ENCODE measurements at regions of chr7 and their contacts with region 1.

Region 1: GRCh38 chr7:107150375-107151073 is 18.3 kb upstream of the HBP1 start:
- DNase-seq: peak; percentile 71
- H3K4me3 Mint-ChIP-seq: no peak overlapping the region
- H3K27ac Mint-ChIP-seq: no peak overlapping the region
- H3K4me1 Mint-ChIP-seq: peaks cover 12% of the 10 kb centered on the region
- H3K27me3 Mint-ChIP-seq: no peaks in the 10 kb centered on the region
- CTCF ChIP-seq: peak; percentile 59

Region 2: GRCh38 chr7:106793015-106793975 is 357.2 kb before region 1 on chr7:
- CTCF ChIA-PET with region 1: interaction called, 125 read pairs
- POLR2A ChIA-PET with region 1: interaction called, 4 read pairs
- intact Hi-C with region 1: loop called (anchors 1 kb)
- DNase-seq: peak; percentile 54
- H3K4me3 Mint-ChIP-seq: no peak overlapping the region
- H3K27ac Mint-ChIP-seq: no peak overlapping the region
- H3K4me1 Mint-ChIP-seq: no peaks in the 10 kb centered on the region
- H3K27me3 Mint-ChIP-seq: peaks cover 42% of the 10 kb centered on the region
- CTCF ChIP-seq: peak; percentile 77

Region 3: DNA sequence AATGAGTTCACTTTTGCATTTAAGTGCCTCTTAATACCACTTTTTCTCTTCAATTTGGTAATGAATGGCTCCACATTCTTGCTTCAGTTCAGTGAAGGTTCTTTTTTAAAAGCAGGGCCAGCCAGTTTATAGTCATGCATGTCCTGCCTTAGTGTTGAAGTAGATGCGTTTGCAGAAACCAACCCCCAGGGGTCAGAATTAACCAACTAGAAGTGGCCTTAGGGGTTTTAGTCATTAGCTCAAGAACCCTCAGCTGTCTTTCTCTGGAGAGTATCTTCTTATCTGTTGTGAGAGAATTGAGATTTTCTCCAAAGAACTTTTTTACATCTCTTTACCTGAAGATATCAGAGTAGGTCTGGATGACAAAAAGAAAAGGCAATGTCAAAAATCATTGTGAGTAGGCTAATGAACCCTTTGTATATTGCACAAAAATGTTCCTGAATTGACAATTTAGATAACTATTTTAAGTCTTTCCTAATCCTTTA is 203.2 kb before region 1 on chr7:
- CTCF ChIA-PET with region 1: interaction called, 156 read pairs
- POLR2A ChIA-PET with region 1: interaction called, 4 read pairs
- intact Hi-C with region 1: loop called (anchors 1 kb)
- DNase-seq: peak; percentile 79
- H3K4me3 Mint-ChIP-seq: no peak overlapping the region
- H3K27ac Mint-ChIP-seq: no peak overlapping the region
- H3K4me1 Mint-ChIP-seq: no peaks in the 10 kb centered on the region
- H3K27me3 Mint-ChIP-seq: peaks cover 68% of the 10 kb centered on the region
- CTCF ChIP-seq: peak; percentile 52

Region 4: GRCh38 chr7:107138696-107139420 is 11.7 kb before region 1 on chr7:
- CTCF ChIA-PET with region 1: interaction called, 21 read pairs
- POLR2A ChIA-PET with region 1: no interaction called
- intact Hi-C with region 1: no loop called
- DNase-seq: no peak
- H3K4me3 Mint-ChIP-seq: no peak overlapping the region
- H3K27ac Mint-ChIP-seq: no peak overlapping the region
- H3K4me1 Mint-ChIP-seq: no peaks in the 10 kb centered on the region
- H3K27me3 Mint-ChIP-seq: peaks cover 66% of the 10 kb centered on the region
- CTCF ChIP-seq: no peak

Region 5: GRCh38 chr7:107501593-107501992 is 351.1 kb after region 1 on chr7:
- CTCF ChIA-PET with region 1: interaction called, 3 read pairs
- POLR2A ChIA-PET with region 1: no interaction called
- intact Hi-C with region 1: loop called (anchors 5 kb)
- DNase-seq: peak; percentile 43
- H3K4me3 Mint-ChIP-seq: no peak overlapping the region
- H3K27ac Mint-ChIP-seq: no peak overlapping the region
- H3K4me1 Mint-ChIP-seq: peaks cover 10% of the 10 kb centered on the region
- H3K27me3 Mint-ChIP-seq: no peaks in the 10 kb centered on the region
- CTCF ChIP-seq: peak; percentile 43